ENCODE measurements at regions of chr15 and their contacts with region 1.

Region 1: DNA sequence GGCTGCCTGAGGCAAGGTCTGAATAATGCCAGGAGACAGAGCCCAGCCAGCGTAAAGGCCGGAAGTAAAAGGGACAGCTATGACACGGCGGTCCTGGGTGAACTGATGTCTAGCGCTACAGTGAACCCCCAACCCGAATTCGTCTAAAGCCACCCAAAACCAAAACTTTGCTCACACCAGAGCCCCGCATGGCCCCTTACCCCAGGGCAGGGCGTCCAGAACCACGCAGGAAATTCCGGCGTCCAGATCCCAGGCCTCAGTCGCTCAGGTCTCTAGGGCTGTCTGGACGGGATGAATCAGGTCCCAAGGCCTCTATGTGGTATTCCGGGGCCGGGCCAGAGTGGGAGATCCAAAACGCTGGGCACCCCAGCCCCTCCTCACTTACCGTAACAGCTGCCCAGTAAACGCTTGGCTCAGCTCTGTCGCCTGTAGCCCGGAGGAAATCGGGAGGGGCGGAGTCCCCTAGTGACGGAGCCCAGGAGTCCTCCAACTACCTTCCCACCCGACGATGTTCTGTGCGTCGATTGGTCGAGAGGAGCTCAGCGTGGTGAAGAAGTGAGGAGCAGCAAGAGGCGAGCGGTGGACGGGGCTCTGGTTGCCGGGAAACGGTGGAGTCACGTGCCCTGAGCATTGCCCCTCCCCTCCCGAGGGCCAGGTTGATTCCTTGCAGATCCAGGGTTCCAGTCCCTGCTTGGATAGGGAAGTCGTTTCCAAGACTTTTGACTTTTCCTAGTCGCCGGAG is at the start of gene CCDC32:
- DNase-seq: peak; percentile 96
- ATAC-seq: peak; percentile 90
- H3K4me3 ChIP-seq: peak within 1 kb of the TSS; percentile 81 to 100 (median 89)
- H3K4me3 Mint-ChIP-seq: peak within 1 kb of the TSS; percentile 82
- H3K27ac ChIP-seq: peak within 1 kb of the TSS; percentile 87 to 97
- H3K27ac Mint-ChIP-seq: peak within 1 kb of the TSS; percentile 86
- H3K4me1 ChIP-seq: peaks cover 50 to 55% of the 10 kb centered on the region in 2 donors
- H3K4me1 Mint-ChIP-seq: peaks cover 62% of the 10 kb centered on the region
- H3K27me3 ChIP-seq: no peaks in the 10 kb centered on the region
- H3K27me3 Mint-ChIP-seq: no peaks in the 10 kb centered on the region
- CTCF ChIP-seq: no peak
- total RNA-seq, gene CCDC32: 76.6 and 78.4 TPM in 2 replicates

Region 2: GRCh38 chr15:40430271-40430805 is 134.4 kb before region 1 on chr15:
- CTCF ChIA-PET with region 1: no interaction called
- POLR2A ChIA-PET with region 1: no interaction called
- intact Hi-C with region 1: no loop called
- DNase-seq: no peak
- ATAC-seq: no peak
- H3K4me3 ChIP-seq: no peak overlapping the region
- H3K4me3 Mint-ChIP-seq: no peak overlapping the region
- H3K27ac ChIP-seq: no peak overlapping the region
- H3K27ac Mint-ChIP-seq: no peak overlapping the region
- H3K4me1 ChIP-seq: no peaks in the 10 kb centered on the region
- H3K4me1 Mint-ChIP-seq: peaks cover 1% of the 10 kb centered on the region
- H3K27me3 ChIP-seq: peaks cover 0 to 5% (median under 1%) of the 10 kb centered on the region in 4 experiments
- H3K27me3 Mint-ChIP-seq: peaks cover under 1% of the 10 kb centered on the region
- CTCF ChIP-seq: no peak

Region 3: DNA sequence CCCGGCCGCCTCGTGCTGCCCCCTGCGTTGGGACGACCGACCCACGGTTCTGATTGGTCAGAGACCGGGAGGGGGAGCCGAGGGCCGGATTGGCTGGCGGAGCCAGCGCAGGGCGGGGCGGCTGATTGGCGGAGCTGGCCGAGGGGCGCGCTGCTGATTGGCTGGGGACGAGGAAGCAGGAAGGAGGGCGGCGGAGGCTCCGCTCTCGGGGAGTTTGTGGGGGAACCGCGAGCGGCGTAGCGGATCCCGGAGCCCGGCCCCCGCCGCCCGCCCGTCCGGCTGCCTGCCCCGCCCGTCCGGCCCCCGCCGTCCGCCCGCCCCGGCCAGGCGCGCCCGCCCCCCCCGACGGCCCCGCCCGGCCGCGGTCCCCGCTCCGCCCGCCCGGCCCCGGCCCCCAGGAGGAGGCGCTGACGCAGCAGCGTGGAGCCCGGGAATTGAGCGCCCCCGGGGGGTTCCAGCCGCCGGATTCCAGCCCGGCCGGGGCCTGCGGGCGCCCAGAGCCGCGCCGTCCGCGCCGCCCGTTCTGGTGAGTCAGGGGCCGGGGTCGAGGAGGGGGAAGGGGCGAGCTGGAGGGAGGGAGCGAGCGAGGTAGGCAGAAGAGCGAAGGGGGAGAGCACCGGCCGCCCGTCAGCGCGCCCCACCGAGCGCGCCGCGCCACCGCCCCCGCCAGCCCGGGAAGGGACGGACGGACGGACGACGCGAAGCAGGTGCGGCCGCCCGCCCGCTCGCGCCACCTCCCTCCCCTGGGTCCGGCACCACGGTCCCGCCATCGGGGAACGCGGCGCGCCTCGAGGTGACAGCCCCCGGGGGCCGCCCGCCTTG is 123.8 kb before region 1 on chr15 and contains the start of gene BAHD1:
- CTCF ChIA-PET with region 1: no interaction called
- POLR2A ChIA-PET with region 1: no interaction called
- intact Hi-C with region 1: loop called (anchors 5 kb)
- DNase-seq: peak; percentile 94
- ATAC-seq: peak; percentile 90
- H3K4me3 ChIP-seq: peak within 1 kb of the TSS; percentile 15 to 80 (median 59)
- H3K4me3 Mint-ChIP-seq: peak within 1 kb of the TSS; percentile 91
- H3K27ac ChIP-seq: peak within 1 kb of the TSS in 1 of 2 donors; percentile 48
- H3K27ac Mint-ChIP-seq: peak within 1 kb of the TSS; percentile 89
- H3K4me1 ChIP-seq: peaks cover 37 to 44% of the 10 kb centered on the region in 2 donors
- H3K4me1 Mint-ChIP-seq: peaks cover 61% of the 10 kb centered on the region
- H3K27me3 ChIP-seq: peaks cover 0 to 35% (median 15%) of the 10 kb centered on the region in 4 experiments
- H3K27me3 Mint-ChIP-seq: peaks cover 25% of the 10 kb centered on the region
- CTCF ChIP-seq: no peak
- total RNA-seq, gene BAHD1: 34.7 and 34.8 TPM in 2 replicates

Region 4: DNA sequence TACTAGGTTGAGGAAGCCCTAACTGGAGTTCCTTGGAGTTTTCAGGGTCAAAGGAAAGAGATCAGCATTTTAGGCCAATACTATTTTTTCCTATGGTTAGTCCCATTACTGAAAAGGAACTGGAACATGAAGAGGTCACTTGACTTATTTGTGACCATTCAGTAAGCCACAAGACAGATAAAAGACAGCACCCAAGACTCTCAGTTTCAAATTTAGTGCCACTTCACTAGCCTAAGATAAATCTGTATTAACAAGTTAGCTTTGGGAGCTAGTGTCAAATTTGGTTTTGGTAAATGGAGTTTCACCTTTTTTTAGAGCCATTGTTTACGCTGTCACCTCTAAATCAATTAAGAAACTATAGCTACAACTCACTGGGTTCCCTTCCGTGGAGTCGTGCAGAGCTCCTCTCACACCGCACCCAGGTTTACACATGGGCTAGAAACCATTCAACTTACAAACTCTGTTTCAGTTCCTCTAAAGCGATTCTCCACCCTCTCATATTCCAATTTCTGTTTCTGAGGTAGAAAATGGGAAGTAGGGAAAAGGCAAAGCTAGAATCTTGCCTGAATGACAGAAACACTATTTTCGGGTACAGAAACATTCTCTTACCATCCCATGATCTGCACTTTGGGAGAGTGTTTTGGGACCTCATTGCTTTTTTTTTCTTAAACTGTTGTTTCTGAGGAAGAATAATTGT is 14.3 kb before region 1 on chr15:
- CTCF ChIA-PET with region 1: interaction called, 7 read pairs
- POLR2A ChIA-PET with region 1: interaction called, 9 read pairs
- intact Hi-C with region 1: loop called (anchors 2 kb)
- DNase-seq: peak; percentile 86
- ATAC-seq: peak; percentile 83
- H3K4me3 ChIP-seq: peak overlapping the region in 3 of 5 experiments; percentile 0 to 28 (median 19)
- H3K4me3 Mint-ChIP-seq: peak overlapping the region; percentile 75
- H3K27ac ChIP-seq: peak overlapping the region; percentile 84 to 90
- H3K27ac Mint-ChIP-seq: peak overlapping the region; percentile 91
- H3K4me1 ChIP-seq: peaks cover 80 to 100% of the 10 kb centered on the region in 2 donors
- H3K4me1 Mint-ChIP-seq: peaks cover 86% of the 10 kb centered on the region
- H3K27me3 ChIP-seq: no peaks in the 10 kb centered on the region
- H3K27me3 Mint-ChIP-seq: no peaks in the 10 kb centered on the region
- CTCF ChIP-seq: no peak

Region 5: GRCh38 chr15:40754883-40755811 is 190.4 kb after region 1 on chr15 and contains the start of gene RMDN3:
- CTCF ChIA-PET with region 1: no interaction called
- POLR2A ChIA-PET with region 1: no interaction called
- intact Hi-C with region 1: loop called (anchors 1 kb)
- DNase-seq: peak; percentile 96
- ATAC-seq: peak; percentile 98
- H3K4me3 ChIP-seq: peak within 1 kb of the TSS; percentile 66 to 100 (median 94)
- H3K4me3 Mint-ChIP-seq: peak within 1 kb of the TSS; percentile 93
- H3K27ac ChIP-seq: peak within 1 kb of the TSS; percentile 73 to 89
- H3K27ac Mint-ChIP-seq: peak within 1 kb of the TSS; percentile 93
- H3K4me1 ChIP-seq: peaks cover 8 to 19% of the 10 kb centered on the region in 2 donors
- H3K4me1 Mint-ChIP-seq: peaks cover 23% of the 10 kb centered on the region
- H3K27me3 ChIP-seq: no peaks in the 10 kb centered on the region
- H3K27me3 Mint-ChIP-seq: no peaks in the 10 kb centered on the region
- CTCF ChIP-seq: no peak
- total RNA-seq, gene RMDN3: 22.1 and 24.2 TPM in 2 replicates

Region 6: GRCh38 chr15:41116116-41116871 is 551.5 kb after region 1 on chr15 and contains the start of gene INO80:
- CTCF ChIA-PET with region 1: no interaction called
- POLR2A ChIA-PET with region 1: no interaction called
- intact Hi-C with region 1: loop called (anchors 10 kb)
- DNase-seq: peak; percentile 98
- ATAC-seq: peak; percentile 66
- H3K4me3 ChIP-seq: peak within 1 kb of the TSS; percentile 73 to 92 (median 80)
- H3K4me3 Mint-ChIP-seq: peak within 1 kb of the TSS; percentile 100
- H3K27ac ChIP-seq: peak within 1 kb of the TSS; percentile 93
- H3K27ac Mint-ChIP-seq: peak within 1 kb of the TSS; percentile 100
- H3K4me1 ChIP-seq: peaks cover 16 to 17% of the 10 kb centered on the region in 2 donors
- H3K4me1 Mint-ChIP-seq: peaks cover 26% of the 10 kb centered on the region
- H3K27me3 ChIP-seq: no peaks in the 10 kb centered on the region
- H3K27me3 Mint-ChIP-seq: no peaks in the 10 kb centered on the region
- CTCF ChIP-seq: no peak
- total RNA-seq, gene INO80: 55.7 and 57.8 TPM in 2 replicates

Region 7: GRCh38 chr15:41416742-41417406 is 852.1 kb after region 1 on chr15 and contains the start of gene RTF1:
- CTCF ChIA-PET with region 1: no interaction called
- POLR2A ChIA-PET with region 1: no interaction called
- intact Hi-C with region 1: no loop called
- DNase-seq: peak; percentile 97
- ATAC-seq: peak; percentile 98
- H3K4me3 ChIP-seq: peak within 1 kb of the TSS; percentile 70 to 90 (median 86)
- H3K4me3 Mint-ChIP-seq: peak within 1 kb of the TSS; percentile 97
- H3K27ac ChIP-seq: peak within 1 kb of the TSS; percentile 55 to 83
- H3K27ac Mint-ChIP-seq: peak within 1 kb of the TSS; percentile 93
- H3K4me1 ChIP-seq: peaks cover 14 to 24% of the 10 kb centered on the region in 2 donors
- H3K4me1 Mint-ChIP-seq: peaks cover 37% of the 10 kb centered on the region
- H3K27me3 ChIP-seq: no peaks in the 10 kb centered on the region
- H3K27me3 Mint-ChIP-seq: no peaks in the 10 kb centered on the region
- CTCF ChIP-seq: no peak
- total RNA-seq, gene RTF1: 39.4 and 45.0 TPM in 2 replicates